ENCODE measurements at regions of chr1 and their contacts with region 1.

Region 1: GRCh38 chr1:201792534-201793305 is 36.2 kb upstream of the IPO9 start:
- DNase-seq: peak; percentile 71 to 87
- H3K4me3 ChIP-seq: no peak overlapping the region
- H3K27ac ChIP-seq: no peak overlapping the region
- H3K4me1 ChIP-seq: no peaks in the 10 kb centered on the region
- H3K27me3 ChIP-seq: no peaks in the 10 kb centered on the region
- CTCF ChIP-seq: peak; percentile 80 to 99 (median 96)
- EP300 ChIP-seq: no peak
- POLR2A ChIP-seq: no peak
- RAD21 ChIP-seq: peak; percentile 99 to 100

Region 2: GRCh38 chr1:201559679-201560162 is 233.0 kb before region 1 on chr1:
- CTCF ChIA-PET with region 1: interaction called, 157 read pairs
- POLR2A ChIA-PET with region 1: interaction called, 3 read pairs
- DNase-seq: peak; percentile 72 to 88
- H3K4me3 ChIP-seq: no peak overlapping the region
- H3K27ac ChIP-seq: no peak overlapping the region
- H3K4me1 ChIP-seq: peaks cover 0 to 8% (median 3%) of the 10 kb centered on the region in 4 experiments; a peak in 4 of 7 replicates
- H3K27me3 ChIP-seq: 0 out of 7 replicates have a peak, but pooled peaks cover 0 to 2% (median 0%) of the 10 kb centered on the region in 4 experiments
- CTCF ChIP-seq: peak; percentile 95 to 99 (median 98)
- EP300 ChIP-seq: 0 out of 3 replicates have a peak, but pooled peaks of 1 of the 2 experiments have one; percentile 20
- POLR2A ChIP-seq: no peak
- RAD21 ChIP-seq: peak; percentile 100

Region 3: GRCh38 chr1:201745023-201745422 is 47.7 kb before region 1 on chr1:
- CTCF ChIA-PET with region 1: interaction called, 20 read pairs
- POLR2A ChIA-PET with region 1: no interaction called
- DNase-seq: no peak
- H3K4me3 ChIP-seq: no peak overlapping the region
- H3K27ac ChIP-seq: no peak overlapping the region
- H3K4me1 ChIP-seq: peaks cover 5 to 20% (median 13%) of the 10 kb centered on the region in 4 experiments
- H3K27me3 ChIP-seq: no peaks in the 10 kb centered on the region
- CTCF ChIP-seq: no peak
- EP300 ChIP-seq: no peak
- POLR2A ChIP-seq: no peak
- RAD21 ChIP-seq: no peak

Region 4: DNA sequence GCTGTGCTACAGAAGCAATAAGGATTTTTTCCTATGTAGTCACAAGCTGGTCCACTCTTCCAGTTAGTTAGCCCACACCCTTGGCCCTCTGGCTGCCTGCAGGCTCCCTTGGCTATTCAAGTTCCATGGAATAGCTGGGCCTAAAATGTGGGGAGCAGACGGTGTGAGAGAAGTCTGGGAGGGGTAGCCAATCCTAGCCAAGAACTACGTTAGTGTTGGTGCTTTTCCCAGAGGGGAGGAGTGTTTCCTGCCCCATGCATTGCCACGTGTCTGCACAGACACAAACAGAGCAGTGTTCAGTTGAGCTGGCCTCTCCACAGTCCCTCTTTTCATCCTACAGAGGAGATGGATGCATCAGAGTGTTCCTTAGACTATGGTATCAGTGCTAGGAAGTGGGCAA is 22.8 kb before region 1 on chr1:
- CTCF ChIA-PET with region 1: interaction called, 19 read pairs
- POLR2A ChIA-PET with region 1: no interaction called
- DNase-seq: no peak
- H3K4me3 ChIP-seq: no peak overlapping the region
- H3K27ac ChIP-seq: no peak overlapping the region
- H3K4me1 ChIP-seq: peaks cover 0 to 4% (median 0%) of the 10 kb centered on the region in 4 experiments; a peak in 1 of 7 replicates
- H3K27me3 ChIP-seq: no peaks in the 10 kb centered on the region
- CTCF ChIP-seq: no peak
- EP300 ChIP-seq: no peak
- POLR2A ChIP-seq: no peak
- RAD21 ChIP-seq: no peak

Region 5: GRCh38 chr1:201807958-201808632 is 15.4 kb after region 1 on chr1:
- CTCF ChIA-PET with region 1: interaction called, 41 read pairs
- POLR2A ChIA-PET with region 1: no interaction called
- DNase-seq: no peak
- H3K4me3 ChIP-seq: no peak overlapping the region
- H3K27ac ChIP-seq: no peak overlapping the region
- H3K4me1 ChIP-seq: no peaks in the 10 kb centered on the region
- H3K27me3 ChIP-seq: no peaks in the 10 kb centered on the region
- CTCF ChIP-seq: no peak
- EP300 ChIP-seq: no peak
- POLR2A ChIP-seq: no peak
- RAD21 ChIP-seq: no peak

Region 6: DNA sequence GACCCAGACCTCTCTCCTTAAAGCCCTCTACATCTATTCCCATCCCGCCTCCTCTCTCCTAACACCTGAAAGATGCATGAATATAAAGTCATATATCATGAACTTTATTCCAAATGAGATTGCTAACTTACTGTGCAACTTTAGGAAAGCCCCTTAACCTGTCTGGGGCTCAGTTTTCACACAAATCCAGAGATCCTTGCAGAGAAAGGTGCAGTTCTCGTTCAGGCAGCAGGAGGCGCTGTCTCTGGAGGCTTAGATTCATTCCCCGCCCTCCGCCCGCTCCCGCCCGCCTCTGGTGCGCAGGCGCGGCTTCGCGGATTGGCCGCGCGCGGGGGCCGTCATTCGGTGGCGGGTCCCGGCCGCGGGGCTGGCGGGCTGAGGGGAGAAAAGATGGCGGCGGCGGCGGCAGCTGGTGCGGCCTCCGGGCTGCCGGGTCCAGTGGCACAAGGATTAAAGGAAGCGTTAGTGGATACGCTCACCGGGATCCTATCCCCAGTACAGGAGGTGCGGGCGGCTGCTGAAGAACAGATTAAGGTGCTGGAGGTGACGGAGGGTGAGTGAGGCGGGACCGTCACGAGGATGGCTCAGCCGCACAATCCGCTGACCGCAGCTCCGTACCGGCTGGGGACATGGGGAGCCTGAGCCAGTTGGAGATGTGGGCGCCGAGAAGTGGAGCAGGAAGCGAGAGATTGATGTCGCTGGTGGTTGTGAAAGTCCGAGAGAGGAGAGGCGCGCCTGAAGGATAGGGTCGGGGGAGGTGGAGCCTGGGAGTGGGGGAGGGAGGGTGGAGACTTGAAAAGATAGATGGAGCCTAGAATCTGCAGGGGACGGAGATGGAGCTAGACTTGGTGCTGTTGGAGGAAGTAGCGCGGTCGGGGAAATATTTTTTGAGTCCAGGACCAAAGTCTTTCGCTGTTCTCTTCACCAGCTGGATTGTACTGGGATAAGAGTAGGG is 36.4 kb after region 1 on chr1 and contains the start of gene IPO9:
- CTCF ChIA-PET with region 1: no interaction called
- POLR2A ChIA-PET with region 1: no interaction called
- DNase-seq: peak; percentile 82 to 99
- H3K4me3 ChIP-seq: peak within 1 kb of the TSS; percentile 79 to 100 (median 98)
- H3K27ac ChIP-seq: peak within 1 kb of the TSS; percentile 96
- H3K4me1 ChIP-seq: peaks cover 0 to 5% (median 1%) of the 10 kb centered on the region in 4 experiments; a peak in 3 of 7 replicates
- H3K27me3 ChIP-seq: no peaks in the 10 kb centered on the region
- CTCF ChIP-seq: peak; percentile 77 to 97 (median 80)
- EP300 ChIP-seq: no peak
- POLR2A ChIP-seq: peak; percentile 42 to 85
- RAD21 ChIP-seq: peak; percentile 19 to 29; a peak in 1 of 4 replicates
- total RNA-seq, gene IPO9: 122 and 124 TPM in 2 replicates

Region 7: GRCh38 chr1:201906336-201906735 is 113.6 kb after region 1 on chr1:
- CTCF ChIA-PET with region 1: no interaction called
- POLR2A ChIA-PET with region 1: no interaction called
- DNase-seq: no peak
- H3K4me3 ChIP-seq: no peak overlapping the region
- H3K27ac ChIP-seq: no peak overlapping the region
- H3K4me1 ChIP-seq: no peaks in the 10 kb centered on the region
- H3K27me3 ChIP-seq: no peaks in the 10 kb centered on the region; a peak in 1 of 7 replicates
- CTCF ChIP-seq: no peak
- EP300 ChIP-seq: no peak
- POLR2A ChIP-seq: no peak
- RAD21 ChIP-seq: no peak

Region 8: DNA sequence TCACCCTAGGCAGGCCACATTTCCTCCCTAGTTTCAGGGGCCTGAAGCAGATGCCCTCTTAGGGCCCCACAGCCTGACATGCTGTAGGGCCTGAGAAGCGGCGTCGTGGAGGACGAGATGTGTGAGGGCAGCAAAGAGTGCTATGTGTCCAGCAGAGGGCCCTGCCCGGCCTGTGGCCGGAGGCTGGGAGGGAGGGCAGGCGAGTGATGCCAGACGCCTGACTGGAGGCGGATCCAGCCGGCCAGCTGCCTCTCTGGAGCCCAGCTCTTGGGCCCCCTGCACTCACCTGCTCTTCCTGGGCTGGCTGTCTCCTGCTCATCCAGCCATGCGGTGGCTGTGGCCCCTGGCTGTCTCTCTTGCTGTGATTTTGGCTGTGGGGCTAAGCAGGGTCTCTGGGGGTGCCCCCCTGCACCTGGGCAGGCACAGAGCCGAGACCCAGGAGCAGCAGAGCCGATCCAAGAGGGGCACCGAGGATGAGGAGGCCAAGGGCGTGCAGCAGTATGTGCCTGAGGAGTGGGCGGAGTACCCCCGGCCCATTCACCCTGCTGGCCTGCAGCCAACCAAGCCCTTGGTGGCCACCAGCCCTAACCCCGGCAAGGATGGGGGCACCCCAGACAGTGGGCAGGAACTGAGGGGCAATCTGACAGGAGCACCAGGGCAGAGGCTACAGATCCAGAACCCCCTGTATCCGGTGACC is 330.1 kb after region 1 on chr1 and contains the start of gene GPR37L1:
- CTCF ChIA-PET with region 1: no interaction called
- POLR2A ChIA-PET with region 1: no interaction called
- DNase-seq: peak; percentile 56 to 81
- H3K4me3 ChIP-seq: no peak within 1 kb of the TSS
- H3K27ac ChIP-seq: no peak within 1 kb of the TSS
- H3K4me1 ChIP-seq: peaks cover 0 to 5% (median 4%) of the 10 kb centered on the region in 4 experiments; a peak in 6 of 7 replicates
- H3K27me3 ChIP-seq: no peaks in the 10 kb centered on the region
- CTCF ChIP-seq: peak; percentile 78 to 88 (median 83)
- EP300 ChIP-seq: no peak
- POLR2A ChIP-seq: no peak
- RAD21 ChIP-seq: peak; percentile 52 to 68
- total RNA-seq, gene GPR37L1: 0.08 and 0.13 TPM in 2 replicates

Measured in H1 (cell line).